ENCODE measurements at regions of chr12 and their contacts with region 1.

Region 1: GRCh38 chr12:9647825-9648700 is 21.4 kb upstream of the CLEC2D start:
- DNase-seq: peak; percentile 87 to 96
- ATAC-seq: peak; percentile 62 to 87 (median 77)
- H3K4me3 ChIP-seq: peak overlapping the region; percentile 68
- H3K4me3 Mint-ChIP-seq: peak overlapping the region; percentile 98
- H3K27ac ChIP-seq: peak overlapping the region; percentile 90
- H3K27ac Mint-ChIP-seq: peak overlapping the region; percentile 89 to 94
- H3K4me1 ChIP-seq: peaks cover 20% of the 10 kb centered on the region
- H3K4me1 Mint-ChIP-seq: peaks cover 72 to 82% of the 10 kb centered on the region in 2 donors
- H3K27me3 ChIP-seq: no peaks in the 10 kb centered on the region
- H3K27me3 Mint-ChIP-seq: no peaks in the 10 kb centered on the region
- CTCF ChIP-seq: no peak

Region 2: GRCh38 chr12:9615420-9616136 is 32.5 kb before region 1 on chr12:
- intact Hi-C with region 1: loop called (anchors 2 kb)
- DNase-seq: peak in 1 of 2 donors; percentile 71
- ATAC-seq: peak; percentile 82 to 86 (median 85)
- H3K4me3 ChIP-seq: peak overlapping the region; percentile 31
- H3K4me3 Mint-ChIP-seq: peak overlapping the region; percentile 90
- H3K27ac ChIP-seq: peak overlapping the region; percentile 97
- H3K27ac Mint-ChIP-seq: peak overlapping the region; percentile 88 to 94
- H3K4me1 ChIP-seq: peaks cover 16% of the 10 kb centered on the region
- H3K4me1 Mint-ChIP-seq: peaks cover 89 to 90% of the 10 kb centered on the region in 2 donors
- H3K27me3 ChIP-seq: no peaks in the 10 kb centered on the region
- H3K27me3 Mint-ChIP-seq: no peaks in the 10 kb centered on the region
- CTCF ChIP-seq: no peak

Region 3: GRCh38 chr12:9687228-9687627 is 39.2 kb after region 1 on chr12:
- intact Hi-C with region 1: loop called (anchors 5 kb)
- DNase-seq: peak in 1 of 2 donors; percentile 58
- ATAC-seq: peak; percentile 21 to 72 (median 50)
- H3K4me3 ChIP-seq: no peak overlapping the region
- H3K4me3 Mint-ChIP-seq: peak overlapping the region; percentile 25
- H3K27ac ChIP-seq: peak overlapping the region; percentile 1
- H3K27ac Mint-ChIP-seq: peak overlapping the region; percentile 85 to 87
- H3K4me1 ChIP-seq: peaks cover 30% of the 10 kb centered on the region
- H3K4me1 Mint-ChIP-seq: peaks cover 61 to 71% of the 10 kb centered on the region in 2 donors
- H3K27me3 ChIP-seq: no peaks in the 10 kb centered on the region
- H3K27me3 Mint-ChIP-seq: no peaks in the 10 kb centered on the region
- CTCF ChIP-seq: no peak

Region 4: DNA sequence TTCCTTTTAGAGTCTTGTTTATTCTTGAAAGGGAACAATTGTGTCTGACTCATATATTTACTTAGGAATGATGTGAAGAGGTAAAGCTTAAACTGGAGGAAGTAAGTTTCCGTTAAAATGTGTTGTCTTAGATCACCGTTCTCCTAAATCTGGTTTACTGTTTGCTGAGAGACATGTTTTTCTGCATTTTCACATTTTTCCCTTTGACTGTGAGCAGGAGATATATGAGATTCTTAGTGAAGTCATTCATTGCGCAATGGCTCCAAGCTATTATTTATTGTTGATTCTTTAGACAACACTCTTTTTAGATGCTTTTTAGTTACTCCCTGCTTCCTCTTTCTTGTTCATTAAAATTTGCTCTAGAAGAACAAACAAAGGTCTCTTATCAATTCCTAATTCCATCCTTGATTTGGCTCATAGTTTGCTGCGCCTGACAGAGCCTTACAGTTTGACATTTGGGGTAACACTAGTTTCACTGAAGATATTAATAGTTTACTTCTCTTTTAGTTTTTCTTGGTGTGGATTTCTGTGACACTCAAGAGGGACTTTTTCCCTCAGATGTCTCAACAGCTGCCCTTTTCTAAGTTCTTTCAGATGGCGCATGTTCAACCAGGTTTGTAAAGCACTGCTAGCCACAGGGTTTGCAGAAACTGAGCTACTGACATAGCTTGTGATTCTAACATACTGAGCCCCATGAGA is 73.5 kb after region 1 on chr12:
- intact Hi-C with region 1: no loop called
- DNase-seq: no peak
- ATAC-seq: no peak
- H3K4me3 ChIP-seq: no peak overlapping the region
- H3K4me3 Mint-ChIP-seq: no peak overlapping the region
- H3K27ac ChIP-seq: peak overlapping the region; percentile 68
- H3K27ac Mint-ChIP-seq: no peak overlapping the region
- H3K4me1 ChIP-seq: no peaks in the 10 kb centered on the region
- H3K4me1 Mint-ChIP-seq: no peaks in the 10 kb centered on the region
- H3K27me3 ChIP-seq: peaks cover 2% of the 10 kb centered on the region
- H3K27me3 Mint-ChIP-seq: peaks cover 16 to 29% of the 10 kb centered on the region in 2 donors
- CTCF ChIP-seq: no peak

Region 5: DNA sequence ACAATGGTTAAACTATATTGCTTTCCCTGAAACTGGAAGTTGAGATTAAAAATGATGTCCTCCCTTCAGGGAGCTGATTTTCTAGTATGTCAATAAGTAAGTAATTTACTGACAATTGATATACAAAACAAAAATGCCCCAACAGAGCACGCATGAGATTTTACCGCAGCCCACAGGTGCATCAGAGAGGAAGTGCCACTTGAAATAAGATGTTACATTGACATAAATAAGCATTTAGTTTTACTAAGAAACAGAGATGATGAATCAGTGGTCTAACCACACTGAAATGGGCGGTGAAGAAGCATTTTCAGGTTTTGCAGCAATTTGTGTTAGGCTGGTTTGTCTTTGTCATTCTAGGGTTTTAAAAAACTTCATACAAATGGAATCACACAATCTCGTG is 93.7 kb after region 1 on chr12:
- intact Hi-C with region 1: loop called (anchors 1 kb)
- DNase-seq: peak; percentile 60 to 93
- ATAC-seq: peak; percentile 71 to 88 (median 82)
- H3K4me3 ChIP-seq: peak overlapping the region; percentile 21
- H3K4me3 Mint-ChIP-seq: peak overlapping the region; percentile 86
- H3K27ac ChIP-seq: peak overlapping the region; percentile 82
- H3K27ac Mint-ChIP-seq: peak overlapping the region; percentile 84 to 85
- H3K4me1 ChIP-seq: peaks cover 32% of the 10 kb centered on the region
- H3K4me1 Mint-ChIP-seq: peaks cover 52 to 53% of the 10 kb centered on the region in 2 donors
- H3K27me3 ChIP-seq: no peaks in the 10 kb centered on the region
- H3K27me3 Mint-ChIP-seq: no peaks in the 10 kb centered on the region
- CTCF ChIP-seq: no peak

Region 6: DNA sequence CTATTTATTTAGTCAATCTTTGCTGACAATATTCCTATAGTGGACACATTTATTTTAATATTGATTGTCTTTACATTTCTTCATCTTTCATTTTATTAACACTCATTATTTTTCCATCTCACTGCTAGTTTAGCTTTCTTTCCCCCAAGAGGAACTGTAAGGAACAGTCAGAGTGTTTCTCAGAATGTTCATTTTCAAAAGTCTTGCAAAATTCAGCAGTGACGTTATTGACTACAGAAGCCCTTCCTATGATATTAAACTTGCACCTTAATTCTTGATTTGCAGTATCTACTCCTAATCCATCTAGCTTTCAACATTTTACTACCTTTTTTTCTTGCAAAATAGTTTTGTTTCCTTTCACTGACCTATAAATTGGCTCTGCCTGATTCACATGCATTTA is 208.1 kb after region 1 on chr12:
- intact Hi-C with region 1: no loop called
- DNase-seq: no peak
- ATAC-seq: no peak
- H3K4me3 ChIP-seq: no peak overlapping the region
- H3K4me3 Mint-ChIP-seq: no peak overlapping the region
- H3K27ac ChIP-seq: no peak overlapping the region
- H3K27ac Mint-ChIP-seq: peak overlapping the region; percentile 71 to 92
- H3K4me1 ChIP-seq: no peaks in the 10 kb centered on the region
- H3K4me1 Mint-ChIP-seq: peaks cover 82 to 92% of the 10 kb centered on the region in 2 donors
- H3K27me3 ChIP-seq: no peaks in the 10 kb centered on the region
- H3K27me3 Mint-ChIP-seq: no peaks in the 10 kb centered on the region
- CTCF ChIP-seq: no peak

Region 7: DNA sequence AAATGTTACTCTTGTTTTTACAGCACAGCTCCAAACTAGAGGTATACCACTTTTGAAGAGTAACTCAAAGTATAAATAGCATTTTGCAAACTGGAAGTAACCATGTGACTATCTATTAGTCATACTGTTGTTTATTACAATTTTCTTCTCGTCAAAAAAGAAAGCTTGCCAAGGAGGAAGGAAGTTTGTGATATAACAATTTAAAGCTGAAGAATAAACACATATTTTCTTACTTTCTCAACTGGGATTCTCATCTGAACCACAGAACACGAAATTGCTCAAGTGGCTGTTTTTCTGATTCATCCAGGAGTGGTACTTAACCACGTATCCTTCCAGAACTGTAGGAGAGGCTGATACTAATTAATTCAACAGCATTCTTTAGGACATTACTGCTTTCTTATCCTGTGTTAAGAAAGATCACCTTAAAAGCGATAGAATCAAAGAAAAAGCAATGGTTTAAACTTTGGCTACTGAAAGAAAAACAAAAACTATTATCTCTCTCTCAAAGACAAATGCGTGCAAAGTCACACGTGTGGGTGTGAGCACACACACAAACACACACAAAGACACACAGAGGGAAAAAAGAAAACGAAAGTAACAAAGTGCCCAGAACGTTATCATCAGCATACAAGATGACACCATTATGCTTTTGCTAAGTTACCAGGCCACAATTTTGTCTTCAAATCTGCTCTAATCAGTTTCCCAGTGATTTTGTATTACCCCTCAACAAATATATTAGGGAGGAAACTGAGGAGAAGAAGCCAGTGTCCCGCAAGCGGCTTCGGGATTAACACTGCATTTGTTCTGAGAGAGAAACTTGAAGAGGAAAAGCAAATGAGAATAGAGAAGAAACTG is 221.5 kb after region 1 on chr12 and contains the start of gene CLEC2B:
- intact Hi-C with region 1: loop called (anchors 5 kb)
- DNase-seq: peak in 1 of 2 donors; percentile 80
- ATAC-seq: peak; percentile 74 to 86 (median 74)
- H3K4me3 ChIP-seq: peak within 1 kb of the TSS; percentile 99
- H3K4me3 Mint-ChIP-seq: peak within 1 kb of the TSS; percentile 98
- H3K27ac ChIP-seq: peak within 1 kb of the TSS; percentile 99
- H3K27ac Mint-ChIP-seq: peak within 1 kb of the TSS; percentile 98 to 100
- H3K4me1 ChIP-seq: peaks cover 9% of the 10 kb centered on the region
- H3K4me1 Mint-ChIP-seq: peaks cover 38 to 43% of the 10 kb centered on the region in 2 donors
- H3K27me3 ChIP-seq: no peaks in the 10 kb centered on the region
- H3K27me3 Mint-ChIP-seq: no peaks in the 10 kb centered on the region
- CTCF ChIP-seq: no peak
- total RNA-seq, gene CLEC2B: 158 to 302 (median 220) TPM

Region 8: GRCh38 chr12:10304161-10304574 is 656.1 kb after region 1 on chr12:
- intact Hi-C with region 1: loop called (anchors 5 kb)
- DNase-seq: peak; percentile 37 to 67
- ATAC-seq: peak; percentile 50 to 77 (median 69)
- H3K4me3 ChIP-seq: peak overlapping the region; percentile 87
- H3K4me3 Mint-ChIP-seq: peak overlapping the region; percentile 95
- H3K27ac ChIP-seq: peak overlapping the region; percentile 84
- H3K27ac Mint-ChIP-seq: peak overlapping the region; percentile 97 to 100
- H3K4me1 ChIP-seq: peaks cover 30% of the 10 kb centered on the region
- H3K4me1 Mint-ChIP-seq: peaks cover 86 to 96% of the 10 kb centered on the region in 2 donors
- H3K27me3 ChIP-seq: no peaks in the 10 kb centered on the region
- H3K27me3 Mint-ChIP-seq: no peaks in the 10 kb centered on the region
- CTCF ChIP-seq: no peak

Measured in natural killer cell (primary cell).